Mucosa of descending colon (tissue), 3 donors: ENCODE measurements at regions of chr3 and their contacts with region 1.

Region 1: DNA sequence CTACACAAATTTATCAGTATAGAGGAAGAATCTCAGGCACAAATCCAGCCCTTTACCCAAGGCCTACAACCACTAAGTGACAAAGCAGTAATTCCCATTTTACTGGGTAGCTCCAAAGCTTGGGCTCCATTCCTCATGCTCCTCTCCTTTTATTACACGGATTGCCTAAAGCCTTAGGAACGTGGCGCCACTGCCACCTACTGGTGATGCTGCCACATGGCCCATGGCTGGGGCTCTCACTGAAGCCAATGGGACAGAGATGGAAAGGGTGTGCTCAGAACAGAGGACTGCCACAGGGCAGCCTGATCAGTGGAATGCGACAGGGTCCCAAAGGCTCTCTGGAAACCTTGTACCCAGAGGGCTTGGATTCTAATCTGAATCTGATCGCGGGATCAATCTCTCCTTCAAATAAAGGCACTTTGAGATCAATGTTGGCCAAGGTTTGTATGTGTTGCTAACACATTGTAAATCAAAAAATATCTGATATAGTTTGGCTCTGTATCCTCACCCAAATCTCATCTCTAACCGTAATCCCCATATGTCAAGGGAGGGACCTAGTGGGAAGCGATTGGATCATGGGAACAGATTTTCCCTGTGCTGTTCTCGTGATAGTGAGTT is 33.5 kb upstream of the LYZL4 start:
- DNase-seq: peak; percentile 73 to 91 (median 89)
- ATAC-seq: peak; percentile 98
- H3K4me3 ChIP-seq: no peak overlapping the region
- H3K4me1 ChIP-seq: no peaks in the 10 kb centered on the region
- CTCF ChIP-seq: peak; percentile 92

Region 2: DNA sequence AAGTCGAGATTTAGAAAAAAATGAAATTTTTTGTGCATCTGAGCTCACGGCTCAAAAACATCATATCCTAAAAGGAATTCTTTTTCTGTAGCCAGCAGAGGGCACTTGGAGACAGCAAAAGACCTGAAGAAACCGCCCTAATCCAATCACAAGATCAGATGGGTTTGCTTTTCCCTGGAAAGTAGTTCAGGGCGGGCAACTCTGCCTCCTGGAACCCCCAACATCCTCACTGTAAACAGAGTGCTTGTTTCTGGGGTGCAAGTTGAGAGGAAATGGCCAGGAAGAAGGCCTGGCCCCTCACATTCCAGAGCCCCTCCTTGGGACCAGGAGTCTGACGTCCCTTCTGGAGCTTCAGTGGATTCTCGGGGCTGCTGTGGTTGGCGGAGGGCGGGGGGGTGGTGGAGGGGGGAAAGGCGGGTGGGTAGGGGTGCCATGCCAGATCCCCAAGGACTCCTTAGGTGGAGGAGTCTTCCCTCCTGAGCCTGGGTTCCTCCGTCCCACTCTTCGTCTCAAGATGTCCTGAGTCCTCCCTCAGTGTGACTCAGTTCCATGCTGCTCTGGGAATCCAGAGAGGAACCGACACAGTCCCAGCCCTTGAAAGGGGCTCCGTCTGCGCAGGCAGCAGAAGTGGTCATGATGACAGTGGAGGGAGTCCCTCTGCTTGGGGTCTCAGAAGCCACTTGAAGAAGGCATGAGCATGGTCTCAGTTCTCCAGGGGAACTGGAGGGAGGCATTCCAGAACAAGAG is 213.8 kb before region 1 on chr3:
- intact Hi-C with region 1: loop called in 1 of 2 experiments (anchors 5 kb)
- DNase-seq: peak in 1 of 3 donors; percentile 28
- ATAC-seq: peak; percentile 65
- H3K4me3 ChIP-seq: no peak overlapping the region
- H3K4me1 ChIP-seq: no peaks in the 10 kb centered on the region
- CTCF ChIP-seq: no peak

Region 3: GRCh38 chr3:42247576-42248027 is 196.3 kb before region 1 on chr3:
- intact Hi-C with region 1: loop called (anchors 5 kb)
- DNase-seq: peak in 2 of 3 donors; percentile 54 to 74
- ATAC-seq: peak; percentile 65
- H3K4me3 ChIP-seq: no peak overlapping the region
- H3K4me1 ChIP-seq: no peaks in the 10 kb centered on the region
- CTCF ChIP-seq: peak; percentile 25